Activated CD4-positive, alpha-beta memory T cell treated with anti-CD3 and anti-CD28 coated beads for 36 hours (primary cell): ENCODE measurements at regions of chr1 and their contacts with region 1.

Region 1: GRCh38 chr1:19485362-19486187 is at the start of gene CAPZB:
- DNase-seq: peak; percentile 95
- H3K4me3 Mint-ChIP-seq: peak within 1 kb of the TSS; percentile 96
- H3K27ac Mint-ChIP-seq: peak within 1 kb of the TSS; percentile 94
- H3K4me1 Mint-ChIP-seq: peaks cover 54% of the 10 kb centered on the region
- H3K27me3 Mint-ChIP-seq: no peaks in the 10 kb centered on the region
- total RNA-seq, gene CAPZB: 388 to 419 TPM

Region 2: GRCh38 chr1:18956369-18957135 is 529.0 kb before region 1 on chr1 and contains the start of gene IFFO2:
- CTCF ChIA-PET with region 1: no interaction called
- POLR2A ChIA-PET with region 1: no interaction called
- intact Hi-C with region 1: loop called (anchors 10 kb)
- DNase-seq: peak; percentile 98
- H3K4me3 Mint-ChIP-seq: peak within 1 kb of the TSS; percentile 84
- H3K27ac Mint-ChIP-seq: peak within 1 kb of the TSS; percentile 71
- H3K4me1 Mint-ChIP-seq: peaks cover 44% of the 10 kb centered on the region
- H3K27me3 Mint-ChIP-seq: peaks cover 2% of the 10 kb centered on the region
- total RNA-seq, gene IFFO2: 40.4 to 42.0 TPM

Region 3: DNA sequence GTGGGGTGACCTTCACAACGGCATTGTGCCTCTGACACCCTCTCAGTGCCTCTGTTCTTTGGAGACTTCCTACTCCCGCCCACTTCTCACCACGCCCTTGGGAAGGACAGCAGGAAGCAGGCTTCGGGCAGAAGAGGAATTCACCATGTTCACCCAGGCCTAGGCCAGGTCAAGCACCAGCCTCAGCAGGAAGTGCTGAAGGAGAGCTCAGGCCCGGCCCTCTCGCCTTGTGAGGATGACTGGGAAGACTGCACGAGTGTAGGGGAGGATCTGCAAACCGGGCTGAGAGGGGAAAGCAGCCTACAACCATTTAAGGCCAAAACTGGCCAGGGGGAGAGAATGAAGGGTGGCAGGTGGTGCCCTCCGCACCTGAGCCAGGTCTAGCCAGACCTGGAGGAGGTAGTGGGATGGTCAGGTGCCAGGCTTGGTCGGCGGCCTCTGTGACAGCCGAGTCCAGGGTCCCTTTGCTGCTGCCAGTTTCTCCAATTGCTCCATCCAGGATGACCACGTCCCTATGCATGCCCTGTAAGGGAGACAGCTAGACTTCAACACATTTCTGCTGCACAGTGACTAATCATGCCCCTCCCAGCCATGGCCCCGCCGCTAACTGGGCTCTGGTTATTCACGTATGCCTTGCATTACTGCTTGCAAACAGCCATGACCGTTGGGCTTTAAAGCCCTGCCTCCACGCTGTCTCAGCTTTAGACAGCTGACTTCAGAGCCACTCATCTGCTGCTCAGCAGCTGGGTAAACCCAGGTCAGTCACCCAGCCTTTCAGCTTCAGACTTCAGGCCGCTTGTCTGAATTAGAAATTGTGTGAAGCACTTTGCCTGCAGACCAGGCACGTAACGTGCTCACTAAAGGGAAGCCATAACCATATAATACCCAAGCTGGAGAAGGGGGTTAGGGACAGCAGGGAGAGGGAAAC is 225.1 kb before region 1 on chr1:
- CTCF ChIA-PET with region 1: no interaction called
- POLR2A ChIA-PET with region 1: no interaction called
- intact Hi-C with region 1: no loop called
- DNase-seq: no peak
- H3K4me3 Mint-ChIP-seq: no peak overlapping the region
- H3K27ac Mint-ChIP-seq: peak overlapping the region; percentile 5
- H3K4me1 Mint-ChIP-seq: peaks cover 27% of the 10 kb centered on the region
- H3K27me3 Mint-ChIP-seq: no peaks in the 10 kb centered on the region

Region 4: GRCh38 chr1:19432943-19433718 is 52.4 kb before region 1 on chr1:
- CTCF ChIA-PET with region 1: interaction called, 4 read pairs
- POLR2A ChIA-PET with region 1: no interaction called
- intact Hi-C with region 1: loop called (anchors 2 kb)
- DNase-seq: peak; percentile 57
- H3K4me3 Mint-ChIP-seq: no peak overlapping the region
- H3K27ac Mint-ChIP-seq: peak overlapping the region; percentile 31
- H3K4me1 Mint-ChIP-seq: peaks cover 85% of the 10 kb centered on the region
- H3K27me3 Mint-ChIP-seq: no peaks in the 10 kb centered on the region

Region 5: GRCh38 chr1:19468397-19468956 is 17.1 kb before region 1 on chr1:
- CTCF ChIA-PET with region 1: interaction called, 12 read pairs
- POLR2A ChIA-PET with region 1: interaction called, 15 read pairs
- intact Hi-C with region 1: loop called (anchors 2 kb)
- DNase-seq: peak; percentile 82
- H3K4me3 Mint-ChIP-seq: peak overlapping the region; percentile 39
- H3K27ac Mint-ChIP-seq: peak overlapping the region; percentile 91
- H3K4me1 Mint-ChIP-seq: peaks cover 89% of the 10 kb centered on the region
- H3K27me3 Mint-ChIP-seq: no peaks in the 10 kb centered on the region

Region 6: DNA sequence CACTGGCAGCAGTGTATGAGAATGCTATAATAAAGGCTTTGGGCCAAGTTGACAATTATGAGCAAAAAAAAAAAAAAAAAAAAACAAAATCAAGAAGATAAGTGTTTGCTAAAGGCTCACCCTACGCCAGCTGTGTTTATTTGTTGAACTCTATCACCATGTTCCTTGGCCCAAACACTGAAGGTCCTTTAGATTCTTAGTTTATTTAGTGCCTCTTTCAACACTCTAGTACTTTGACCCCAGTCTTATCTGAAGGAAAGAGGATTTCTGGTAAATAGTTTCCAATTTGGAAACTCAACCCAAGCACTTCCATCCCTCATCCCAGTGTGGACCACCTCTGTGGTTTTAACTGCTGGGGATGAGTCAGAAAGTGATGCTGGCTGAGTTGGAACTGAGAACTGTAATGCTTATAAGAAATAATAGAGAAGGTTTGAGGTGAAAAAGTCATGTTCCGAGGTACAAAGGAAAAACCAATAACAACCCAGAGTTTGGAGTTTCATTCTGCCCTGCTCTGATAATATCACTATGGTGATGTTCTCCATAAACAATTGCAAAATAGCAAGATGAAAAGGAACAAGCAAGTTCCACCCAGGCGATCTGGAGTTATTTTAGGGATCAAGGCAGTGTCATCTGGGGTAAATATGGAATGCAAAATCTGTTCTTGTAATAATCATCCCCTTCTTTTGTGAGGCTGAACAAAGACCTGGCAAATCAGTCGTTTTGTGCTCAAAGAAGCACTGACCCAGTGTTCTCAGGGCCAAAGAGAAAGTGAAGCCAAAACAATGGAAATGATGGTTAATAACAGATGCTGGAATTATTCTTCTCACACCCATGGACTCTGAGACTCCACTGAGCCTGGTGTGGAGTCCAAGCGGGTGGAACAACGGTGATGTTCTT is 19.5 kb after region 1 on chr1:
- CTCF ChIA-PET with region 1: interaction called, 10 read pairs
- POLR2A ChIA-PET with region 1: interaction called, 3 read pairs
- intact Hi-C with region 1: no loop called
- DNase-seq: no peak
- H3K4me3 Mint-ChIP-seq: no peak overlapping the region
- H3K27ac Mint-ChIP-seq: peak overlapping the region; percentile 13
- H3K4me1 Mint-ChIP-seq: peaks cover 37% of the 10 kb centered on the region
- H3K27me3 Mint-ChIP-seq: no peaks in the 10 kb centered on the region

Region 7: DNA sequence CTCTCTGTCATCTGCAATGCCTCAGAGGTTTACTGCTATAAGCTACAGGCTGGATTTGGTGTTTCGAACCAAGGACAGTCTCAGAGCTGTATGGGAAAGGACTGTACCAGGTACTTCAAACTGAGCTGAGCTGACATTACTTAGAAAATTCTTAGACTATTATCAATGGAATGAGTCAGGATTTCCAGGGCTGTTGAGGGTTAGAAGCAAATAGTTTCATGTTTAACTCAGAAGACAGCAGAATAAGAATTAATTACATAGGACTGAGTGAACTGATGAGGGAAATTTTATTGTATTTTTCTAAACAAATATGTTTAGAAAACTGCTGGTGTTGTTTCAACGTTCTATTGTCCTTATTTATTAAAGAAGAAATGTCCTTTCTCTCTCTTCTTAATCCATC is 74.1 kb after region 1 on chr1:
- CTCF ChIA-PET with region 1: no interaction called
- POLR2A ChIA-PET with region 1: no interaction called
- intact Hi-C with region 1: no loop called
- DNase-seq: no peak
- H3K4me3 Mint-ChIP-seq: no peak overlapping the region
- H3K27ac Mint-ChIP-seq: no peak overlapping the region
- H3K4me1 Mint-ChIP-seq: peaks cover 8% of the 10 kb centered on the region
- H3K27me3 Mint-ChIP-seq: no peaks in the 10 kb centered on the region

Region 8: GRCh38 chr1:19651141-19651737 is 165.7 kb after region 1 on chr1:
- CTCF ChIA-PET with region 1: interaction called, 11 read pairs
- POLR2A ChIA-PET with region 1: no interaction called
- intact Hi-C with region 1: loop called (anchors 5 kb)
- DNase-seq: peak; percentile 71
- H3K4me3 Mint-ChIP-seq: no peak overlapping the region
- H3K27ac Mint-ChIP-seq: no peak overlapping the region
- H3K4me1 Mint-ChIP-seq: peaks cover 34% of the 10 kb centered on the region
- H3K27me3 Mint-ChIP-seq: no peaks in the 10 kb centered on the region